Activated B cell treated with CpG ODN at 0.5 μM for 24 hours (primary cell): ENCODE measurements at regions of chr2 and their contacts with region 1.

Region 1: GRCh38 chr2:223837287-223838061 is at the start of gene AP1S3:
- DNase-seq: peak; percentile 76
- ATAC-seq: peak; percentile 75
- H3K4me3 Mint-ChIP-seq: peak within 1 kb of the TSS; percentile 99
- H3K27ac Mint-ChIP-seq: peak within 1 kb of the TSS; percentile 96
- H3K4me1 Mint-ChIP-seq: peaks cover 64% of the 10 kb centered on the region
- H3K27me3 Mint-ChIP-seq: no peaks in the 10 kb centered on the region
- CTCF ChIP-seq: no peak
- total RNA-seq, gene AP1S3: 46.0 and 46.3 TPM in 2 replicates

Region 2: DNA sequence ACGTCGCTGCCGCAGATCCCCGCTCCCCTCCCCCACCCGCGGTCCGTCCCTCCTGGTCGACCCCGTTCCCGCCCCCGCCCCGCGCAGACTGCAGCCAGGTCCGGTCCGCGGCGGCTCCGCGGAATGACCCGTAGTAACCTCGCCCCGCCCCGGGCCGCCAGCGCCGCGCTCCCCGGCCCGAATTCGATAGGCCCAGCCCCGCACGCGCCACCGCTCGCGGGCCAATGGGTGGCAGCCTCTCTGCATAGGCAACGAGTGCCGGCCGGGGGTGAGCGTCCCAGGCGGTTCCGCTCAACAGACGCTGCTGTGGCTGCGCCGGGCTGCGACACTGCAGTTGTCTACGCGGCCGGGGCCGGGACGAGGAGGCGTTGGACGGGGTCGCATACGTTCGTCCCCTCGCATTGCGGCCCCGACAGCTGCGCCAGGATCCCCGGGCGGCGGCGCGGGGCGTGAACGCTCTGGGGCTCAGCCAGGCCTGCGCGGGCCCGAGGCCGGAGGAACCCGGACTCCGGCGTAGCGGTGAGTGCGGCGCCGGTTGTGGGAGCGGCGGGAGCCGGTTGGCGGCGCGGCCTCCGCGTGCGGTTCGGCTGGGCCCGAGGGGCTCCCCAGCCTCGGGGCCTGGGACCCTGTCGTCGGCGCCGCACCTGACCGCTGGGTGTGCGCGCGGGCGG is 976.6 kb before region 1 on chr2 and contains the start of gene ACSL3:
- CTCF ChIA-PET with region 1: no interaction called
- POLR2A ChIA-PET with region 1: no interaction called
- intact Hi-C with region 1: loop called (anchors 5 kb)
- DNase-seq: peak; percentile 90
- ATAC-seq: peak; percentile 97
- H3K4me3 Mint-ChIP-seq: peak within 1 kb of the TSS; percentile 81
- H3K27ac Mint-ChIP-seq: peak within 1 kb of the TSS; percentile 87
- H3K4me1 Mint-ChIP-seq: peaks cover 7% of the 10 kb centered on the region
- H3K27me3 Mint-ChIP-seq: no peaks in the 10 kb centered on the region
- CTCF ChIP-seq: no peak
- total RNA-seq, gene ACSL3: 40.6 and 41.2 TPM in 2 replicates

Region 3: DNA sequence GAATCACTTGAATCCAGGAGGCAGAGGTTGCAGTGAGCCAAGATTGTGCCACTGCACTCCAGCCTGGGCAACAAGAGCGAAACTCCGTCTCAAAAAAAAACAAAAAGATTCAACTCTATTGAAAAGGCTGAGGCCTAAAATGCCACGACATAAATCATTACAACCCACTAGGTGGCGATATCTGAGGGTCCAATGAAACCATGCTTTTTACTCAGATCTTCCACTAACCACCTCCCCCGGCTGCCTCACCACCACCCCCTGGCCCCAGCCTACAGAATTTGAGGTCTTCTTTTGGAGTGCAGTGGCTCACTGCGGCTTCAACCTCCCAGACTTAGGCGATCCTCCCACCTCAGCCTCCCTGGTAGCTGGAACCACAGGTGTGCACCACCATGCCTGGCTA is 57.6 kb before region 1 on chr2:
- CTCF ChIA-PET with region 1: interaction called, 5 read pairs
- POLR2A ChIA-PET with region 1: interaction called, 7 read pairs
- intact Hi-C with region 1: loop called (anchors 2 kb)
- DNase-seq: peak; percentile 21
- ATAC-seq: peak; percentile 90
- H3K4me3 Mint-ChIP-seq: no peak overlapping the region
- H3K27ac Mint-ChIP-seq: peak overlapping the region; percentile 41
- H3K4me1 Mint-ChIP-seq: peaks cover 21% of the 10 kb centered on the region
- H3K27me3 Mint-ChIP-seq: no peaks in the 10 kb centered on the region
- CTCF ChIP-seq: no peak

Region 4: GRCh38 chr2:223811757-223812156 is 25.7 kb before region 1 on chr2:
- CTCF ChIA-PET with region 1: no interaction called
- POLR2A ChIA-PET with region 1: interaction called, 12 read pairs
- intact Hi-C with region 1: no loop called
- DNase-seq: no peak
- ATAC-seq: no peak
- H3K4me3 Mint-ChIP-seq: no peak overlapping the region
- H3K27ac Mint-ChIP-seq: no peak overlapping the region
- H3K4me1 Mint-ChIP-seq: peaks cover 65% of the 10 kb centered on the region
- H3K27me3 Mint-ChIP-seq: no peaks in the 10 kb centered on the region
- CTCF ChIP-seq: no peak

Region 5: DNA sequence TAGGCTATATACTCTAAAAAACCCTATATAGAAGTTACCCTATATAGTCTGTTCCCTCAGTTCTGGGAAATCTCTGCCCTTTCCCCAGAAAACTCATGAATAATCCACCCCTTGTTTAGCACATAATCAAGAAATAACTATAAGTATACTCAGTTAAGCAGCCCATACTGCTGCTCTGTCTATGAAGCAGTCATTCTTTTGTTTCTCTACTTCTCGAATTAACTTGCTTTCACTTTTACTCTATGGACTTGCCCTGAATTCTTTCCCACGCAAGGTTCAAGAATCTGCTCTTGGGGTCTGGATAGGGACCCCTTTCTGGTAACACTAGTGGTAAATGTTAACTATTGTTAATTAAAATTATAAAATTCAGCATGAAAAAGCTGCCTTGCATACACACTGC is 17.3 kb after region 1 on chr2:
- CTCF ChIA-PET with region 1: interaction called, 3 read pairs
- POLR2A ChIA-PET with region 1: interaction called, 6 read pairs
- intact Hi-C with region 1: loop called (anchors 2 kb)
- DNase-seq: no peak
- ATAC-seq: no peak
- H3K4me3 Mint-ChIP-seq: no peak overlapping the region
- H3K27ac Mint-ChIP-seq: peak overlapping the region; percentile 46
- H3K4me1 Mint-ChIP-seq: peaks cover 28% of the 10 kb centered on the region
- H3K27me3 Mint-ChIP-seq: no peaks in the 10 kb centered on the region
- CTCF ChIP-seq: no peak

Region 6: GRCh38 chr2:223896833-223897311 is 59.4 kb after region 1 on chr2:
- CTCF ChIA-PET with region 1: no interaction called
- POLR2A ChIA-PET with region 1: interaction called, 80 read pairs
- intact Hi-C with region 1: loop called (anchors 1 kb)
- DNase-seq: peak; percentile 22
- ATAC-seq: peak; percentile 45
- H3K4me3 Mint-ChIP-seq: peak overlapping the region; percentile 67
- H3K27ac Mint-ChIP-seq: peak overlapping the region; percentile 99
- H3K4me1 Mint-ChIP-seq: peaks cover 74% of the 10 kb centered on the region
- H3K27me3 Mint-ChIP-seq: no peaks in the 10 kb centered on the region
- CTCF ChIP-seq: no peak

Region 7: DNA sequence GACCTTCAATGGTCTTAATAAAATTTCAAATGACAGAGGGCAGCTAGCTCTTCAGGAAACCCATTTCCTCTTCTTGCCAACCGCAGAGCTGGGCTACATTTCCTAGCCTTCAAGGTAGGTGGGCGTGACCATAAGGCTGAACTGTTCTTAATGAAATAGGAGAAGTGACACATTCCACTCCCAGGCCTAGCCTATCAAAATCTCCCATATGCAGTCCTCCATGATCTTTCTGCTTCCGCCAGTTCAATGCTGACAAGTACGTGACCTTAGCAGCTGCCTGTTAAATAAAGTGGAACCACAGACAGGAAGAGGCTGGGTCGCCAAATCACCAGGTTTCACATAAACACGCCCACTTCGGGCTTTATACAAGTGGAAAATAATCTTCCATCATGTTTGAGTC is 188.4 kb after region 1 on chr2:
- CTCF ChIA-PET with region 1: no interaction called
- POLR2A ChIA-PET with region 1: interaction called, 3 read pairs
- intact Hi-C with region 1: loop called (anchors 2 kb)
- DNase-seq: peak; percentile 27
- ATAC-seq: peak; percentile 99
- H3K4me3 Mint-ChIP-seq: peak overlapping the region; percentile 53
- H3K27ac Mint-ChIP-seq: peak overlapping the region; percentile 79
- H3K4me1 Mint-ChIP-seq: peaks cover 49% of the 10 kb centered on the region
- H3K27me3 Mint-ChIP-seq: no peaks in the 10 kb centered on the region
- CTCF ChIP-seq: no peak